ENCODE measurements at regions of chr13 and their contacts with region 1.

Region 1: DNA sequence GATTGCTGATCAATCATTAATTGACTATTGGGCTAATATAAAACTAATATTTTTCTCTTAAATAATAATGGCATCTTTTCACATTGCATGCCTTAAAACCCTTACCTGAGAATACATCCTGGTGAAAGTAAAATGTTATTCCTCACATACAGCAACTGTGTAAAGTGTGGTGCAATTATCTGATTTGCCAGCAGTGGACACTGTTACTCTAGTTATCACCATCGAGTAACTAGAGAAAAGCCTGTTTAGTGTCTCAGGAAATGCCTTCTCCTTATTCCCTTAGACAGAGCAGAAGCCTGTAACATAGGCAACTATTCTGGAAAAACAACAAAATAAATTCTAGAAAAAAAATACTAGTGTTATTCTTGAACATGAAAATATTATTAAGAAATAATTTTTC is 459.8 kb downstream of the FGF14 start:
- DNase-seq: peak in 1 of 2 donors; percentile 13
- ATAC-seq: peak; percentile 88

Region 2: DNA sequence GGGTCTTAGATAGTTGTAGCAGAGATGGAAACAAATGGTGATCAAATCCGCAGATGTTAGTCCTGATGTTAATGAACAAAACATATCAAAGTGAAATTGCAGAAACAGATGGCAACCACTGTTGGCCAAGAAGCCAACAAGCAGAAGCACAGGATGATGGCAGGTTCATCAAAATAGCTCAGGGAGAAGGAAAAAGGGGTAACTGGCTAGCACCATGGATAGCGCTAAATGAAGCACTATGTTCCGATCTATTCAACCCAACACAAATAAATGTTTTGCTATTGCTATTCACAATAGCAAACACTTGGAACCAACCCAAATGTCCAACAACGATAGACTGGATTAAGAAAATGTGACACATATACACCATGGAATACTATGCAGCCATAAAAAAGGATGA is 46.1 kb after region 1 on chr13:
- intact Hi-C with region 1: no loop called
- DNase-seq: no peak
- ATAC-seq: no peak

Region 3: DNA sequence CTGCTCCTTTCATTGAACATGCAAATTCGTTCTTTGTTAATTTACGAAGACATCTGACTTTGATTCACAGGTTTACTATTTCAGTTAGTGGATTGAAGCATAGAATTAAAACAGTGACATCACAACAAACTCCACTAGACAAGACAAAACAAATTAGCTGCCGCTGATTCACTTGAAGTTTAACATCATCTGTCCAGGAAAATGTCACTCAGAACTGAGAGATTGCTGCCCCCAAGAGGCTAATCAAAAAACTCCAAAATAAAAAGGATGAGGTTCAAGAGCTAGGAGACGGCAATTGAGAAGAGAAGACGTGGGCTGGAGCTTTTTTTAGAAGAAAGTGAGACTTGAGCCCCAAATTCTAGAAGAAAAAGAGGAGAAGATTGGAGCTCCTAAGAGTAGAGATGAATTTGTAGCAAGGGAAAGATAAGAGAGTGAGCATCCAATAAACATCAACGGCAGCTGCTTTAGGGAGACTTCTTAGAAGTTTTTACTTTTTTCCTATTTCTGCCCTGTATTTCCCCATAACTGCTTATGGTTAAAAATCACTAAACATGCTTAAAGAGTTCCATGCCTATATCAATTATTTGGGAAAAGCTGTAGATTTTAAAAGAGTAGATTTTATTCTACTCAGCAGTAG is 614.0 kb after region 1 on chr13:
- intact Hi-C with region 1: loop called in 1 of 2 experiments (anchors 5 kb)
- DNase-seq: no peak
- ATAC-seq: no peak